ENCODE measurements at regions of chr18 and their contacts with region 1.

Region 1: DNA sequence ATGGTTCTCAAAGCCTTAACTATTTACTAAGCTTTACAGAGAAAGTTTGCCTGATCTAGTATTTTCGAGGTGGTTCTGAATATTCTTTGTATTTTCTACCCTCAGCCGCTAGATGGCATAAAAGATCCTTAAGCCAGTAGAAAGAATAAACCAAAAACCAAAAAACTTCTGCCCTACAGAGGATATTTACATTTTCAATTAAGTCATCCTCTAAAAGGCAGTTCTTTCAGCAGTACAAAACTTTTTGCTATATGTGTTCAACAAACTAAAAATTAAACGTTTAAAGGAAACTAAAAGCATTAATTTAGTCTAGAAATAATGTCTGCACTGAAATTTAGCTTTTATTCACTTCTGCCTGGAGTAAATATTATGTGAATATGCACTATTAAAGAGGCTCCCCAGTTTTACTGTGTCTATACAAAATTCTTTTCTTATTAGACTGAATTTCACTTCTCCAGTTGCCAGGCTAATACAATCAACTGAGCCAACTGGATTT is 297.5 kb downstream of the PIEZO2 start:
- DNase-seq: no peak

Region 2: DNA sequence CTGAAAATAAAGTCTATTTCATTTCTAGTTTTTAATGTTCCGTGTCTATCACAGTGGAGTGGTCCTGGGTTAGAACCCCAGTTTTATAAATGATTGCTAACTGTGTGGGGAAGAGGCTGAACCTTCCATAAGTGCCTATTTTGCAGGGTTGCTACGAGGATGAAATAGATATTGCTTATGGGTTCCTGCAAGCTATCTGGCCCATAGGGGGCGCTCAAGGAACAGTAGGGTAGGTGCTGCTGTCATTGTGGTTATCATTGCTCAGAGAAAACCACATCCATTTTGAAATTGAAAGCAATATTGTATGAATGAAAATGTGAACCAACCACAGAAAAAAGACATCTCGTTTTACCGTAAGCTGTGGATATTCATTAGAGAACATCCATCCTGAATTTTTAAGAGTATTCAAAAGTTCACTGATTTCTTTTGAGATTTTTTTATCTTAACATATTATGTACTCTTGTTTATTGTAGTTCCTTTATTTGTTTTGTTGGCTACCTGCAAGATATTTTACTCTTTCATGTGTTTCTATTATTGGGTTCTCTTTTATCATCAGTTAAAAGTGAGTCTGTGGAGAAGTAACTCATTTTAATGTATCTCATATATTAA is 64.5 kb before region 1 on chr18:
- intact Hi-C with region 1: loop called (anchors 10 kb)
- DNase-seq: peak in 7 of 10 donors; percentile 26 to 93 (median 75)

Region 3: GRCh38 chr18:11149441-11150270 is 297.8 kb after region 1 on chr18 and contains the start of gene PIEZO2:
- intact Hi-C with region 1: loop called (anchors 2 kb)
- DNase-seq: peak; percentile 45 to 97 (median 72)

Region 4: GRCh38 chr18:11553098-11553940 is 701.4 kb after region 1 on chr18:
- intact Hi-C with region 1: loop called (anchors 5 kb)
- DNase-seq: peak in 3 of 10 donors; percentile 14 to 25 (median 24)

Measured in posterior cingulate gyrus (tissue), 11 donors.